Sigmoid colon (tissue), 7 donors: ENCODE measurements at regions of chr9 and their contacts with region 1.

Region 1: DNA sequence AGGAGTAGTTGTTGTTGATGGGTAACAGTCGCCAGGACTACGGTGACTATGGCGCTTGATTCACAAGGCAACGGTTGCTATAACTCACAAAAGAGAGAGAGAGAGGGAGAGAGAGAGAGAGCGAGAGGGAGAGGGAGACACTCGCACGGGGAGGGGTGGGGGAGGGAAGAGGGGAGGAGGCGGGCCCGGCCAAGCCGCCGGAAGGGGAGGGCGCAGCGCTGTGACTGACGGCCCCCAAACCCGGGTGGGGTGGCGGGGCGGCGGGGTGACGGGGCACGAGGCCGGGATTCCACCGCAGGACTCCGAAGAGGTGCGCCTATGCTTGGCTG is at the start of gene RFX3:
- DNase-seq: peak; percentile 95
- H3K4me3 ChIP-seq: peak within 1 kb of the TSS; percentile 84 to 97 (median 94)
- H3K27ac ChIP-seq: peak within 1 kb of the TSS; percentile 98 to 100 (median 100)
- H3K4me1 ChIP-seq: peaks cover 5 to 43% (median 19%) of the 10 kb centered on the region in 4 donors
- H3K27me3 ChIP-seq: no peaks in the 10 kb centered on the region
- CTCF ChIP-seq: no peak
- EP300 ChIP-seq: peak in 1 of 4 donors; percentile 57
- POLR2A ChIP-seq: no peak
- total RNA-seq, gene RFX3: 6.4 to 15.0 (median 9.6) TPM

Region 2: GRCh38 chr9:2620919-2621679 is 904.7 kb before region 1 on chr9:
- intact Hi-C with region 1: loop called (anchors 5 kb)
- DNase-seq: peak; percentile 92
- H3K4me3 ChIP-seq: peak overlapping the region; percentile 46 to 84 (median 68)
- H3K27ac ChIP-seq: peak overlapping the region; percentile 67 to 86 (median 81)
- H3K4me1 ChIP-seq: peaks cover 0 to 26% (median 19%) of the 10 kb centered on the region in 4 donors
- H3K27me3 ChIP-seq: no peaks in the 10 kb centered on the region
- CTCF ChIP-seq: peak in 1 of 4 experiments; percentile 11
- EP300 ChIP-seq: no peak
- POLR2A ChIP-seq: no peak

Region 3: GRCh38 chr9:3478549-3478953 is 47.2 kb before region 1 on chr9:
- intact Hi-C with region 1: no loop called
- DNase-seq: no peak
- H3K4me3 ChIP-seq: no peak overlapping the region
- H3K27ac ChIP-seq: no peak overlapping the region
- H3K4me1 ChIP-seq: no peaks in the 10 kb centered on the region
- H3K27me3 ChIP-seq: no peaks in the 10 kb centered on the region
- CTCF ChIP-seq: no peak
- EP300 ChIP-seq: no peak
- POLR2A ChIP-seq: no peak

Region 4: GRCh38 chr9:4106760-4107143 is 581.0 kb after region 1 on chr9:
- intact Hi-C with region 1: loop called (anchors 10 kb)
- DNase-seq: no peak
- H3K4me3 ChIP-seq: no peak overlapping the region
- H3K27ac ChIP-seq: peak overlapping the region in 2 of 4 donors; percentile 6 to 36
- H3K4me1 ChIP-seq: peaks cover 0 to 32% (median 16%) of the 10 kb centered on the region in 4 donors
- H3K27me3 ChIP-seq: no peaks in the 10 kb centered on the region
- CTCF ChIP-seq: no peak
- EP300 ChIP-seq: no peak
- POLR2A ChIP-seq: no peak

Region 5: DNA sequence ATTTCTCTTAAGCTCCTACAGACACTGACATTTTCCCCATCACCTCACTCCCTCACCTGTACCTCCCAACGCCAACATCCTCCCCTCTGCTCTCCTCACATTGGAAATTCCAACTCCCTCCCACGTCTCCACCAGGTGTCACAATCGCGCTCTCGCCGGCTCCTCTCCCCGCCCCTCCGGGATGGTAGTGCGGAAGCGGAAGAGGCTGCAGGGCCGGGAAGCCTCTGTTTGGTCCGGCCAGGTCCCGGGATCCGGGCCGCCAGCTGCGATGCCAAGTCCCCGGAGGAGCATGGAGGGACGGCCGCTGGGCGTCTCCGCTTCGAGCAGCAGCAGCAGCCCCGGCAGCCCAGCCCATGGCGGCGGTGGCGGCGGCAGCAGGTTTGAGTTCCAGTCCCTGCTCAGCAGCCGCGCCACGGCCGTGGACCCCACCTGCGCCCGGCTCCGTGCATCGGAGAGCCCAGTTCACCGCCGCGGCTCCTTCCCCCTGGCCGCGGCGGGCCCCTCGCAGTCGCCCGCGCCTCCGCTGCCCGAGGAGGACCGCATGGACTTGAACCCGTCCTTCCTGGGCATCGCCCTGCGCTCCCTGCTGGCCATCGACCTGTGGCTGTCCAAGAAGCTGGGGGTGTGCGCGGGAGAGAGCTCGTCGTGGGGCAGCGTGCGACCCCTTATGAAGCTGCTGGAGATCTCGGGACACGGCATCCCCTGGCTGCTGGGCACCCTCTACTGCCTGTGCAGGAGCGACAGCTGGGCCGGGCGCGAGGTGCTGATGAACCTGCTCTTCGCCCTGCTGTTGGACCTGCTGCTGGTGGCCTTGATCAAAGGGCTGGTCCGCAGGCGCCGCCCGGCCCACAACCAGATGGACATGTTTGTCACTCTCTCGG is 1136.5 kb after region 1 on chr9 and contains the start of gene PLPP6:
- intact Hi-C with region 1: loop called (anchors 10 kb)
- DNase-seq: peak; percentile 93
- H3K4me3 ChIP-seq: peak within 1 kb of the TSS; percentile 85 to 98 (median 92)
- H3K27ac ChIP-seq: peak within 1 kb of the TSS; percentile 81 to 89 (median 88)
- H3K4me1 ChIP-seq: peaks cover 0 to 46% (median 18%) of the 10 kb centered on the region in 4 donors
- H3K27me3 ChIP-seq: no peaks in the 10 kb centered on the region
- CTCF ChIP-seq: peak; percentile 55 to 78 (median 58)
- EP300 ChIP-seq: no peak
- POLR2A ChIP-seq: no peak
- total RNA-seq, gene PLPP6: 3.0 to 6.9 (median 3.7) TPM

Region 6: DNA sequence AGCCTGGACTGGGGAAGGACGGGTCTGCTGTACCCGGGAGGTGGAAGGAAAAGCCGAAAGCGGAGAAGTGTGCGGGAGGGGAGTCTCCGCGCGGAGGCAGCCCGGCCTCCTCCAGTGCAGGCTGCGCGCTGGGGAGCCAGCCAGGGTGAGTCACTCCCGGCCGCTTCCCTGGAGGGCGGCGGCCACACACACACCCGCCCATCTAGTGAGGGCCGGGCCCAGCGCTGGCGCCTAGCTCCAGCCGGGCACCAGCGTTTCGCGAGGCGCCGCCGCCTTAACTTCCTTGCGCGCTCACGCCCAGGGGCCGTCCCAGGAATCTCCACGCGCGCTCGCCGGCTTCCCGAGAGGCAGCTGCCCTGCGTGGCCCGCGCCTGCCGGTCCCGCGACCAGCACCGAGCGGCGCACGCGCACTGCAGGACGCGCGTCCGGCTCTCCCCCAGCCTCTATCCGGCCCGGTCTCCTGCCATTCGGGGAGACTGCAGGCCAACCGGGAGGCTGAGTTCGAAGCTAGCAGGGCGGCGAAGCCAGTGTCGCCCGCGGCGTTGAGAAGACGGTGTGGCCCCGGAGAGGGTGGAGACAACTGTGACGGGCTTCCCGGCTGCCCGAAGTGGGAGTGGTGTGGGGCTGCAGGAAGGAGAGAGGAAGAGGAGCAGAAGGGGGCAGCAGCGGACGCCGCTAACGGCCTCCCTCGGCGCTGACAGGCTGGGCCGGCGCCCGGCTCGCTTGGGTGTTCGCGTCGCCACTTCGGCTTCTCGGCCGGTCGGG is 1459.0 kb after region 1 on chr9 and contains the start of gene JAK2:
- intact Hi-C with region 1: loop called (anchors 10 kb)
- DNase-seq: peak; percentile 96
- H3K4me3 ChIP-seq: peak within 1 kb of the TSS; percentile 64 to 94 (median 84)
- H3K27ac ChIP-seq: peak within 1 kb of the TSS; percentile 95 to 99 (median 97)
- H3K4me1 ChIP-seq: peaks cover 0 to 45% (median 34%) of the 10 kb centered on the region in 4 donors
- H3K27me3 ChIP-seq: no peaks in the 10 kb centered on the region
- CTCF ChIP-seq: peak in 1 of 4 experiments; percentile 25
- EP300 ChIP-seq: no peak
- POLR2A ChIP-seq: peak; percentile 52 to 62
- total RNA-seq, gene JAK2: 28.5 to 36.8 (median 31.0) TPM